Mammary epithelial cell (primary cell): ENCODE measurements at regions of chr1 and their contacts with region 1.

Region 1: GRCh38 chr1:89632657-89633247 is at the start of gene LRRC8C:
- DNase-seq: peak; percentile 65
- H3K4me3 ChIP-seq: peak within 1 kb of the TSS; percentile 80 to 96 (median 92)
- H3K27ac ChIP-seq: peak within 1 kb of the TSS; percentile 60
- H3K4me1 ChIP-seq: peaks cover 28% of the 10 kb centered on the region
- H3K27me3 ChIP-seq: no peaks in the 10 kb centered on the region
- CTCF ChIP-seq: peak in 1 of 2 donors; percentile 37
- total RNA-seq, gene LRRC8C: 6.5 to 17.2 TPM

Region 2: DNA sequence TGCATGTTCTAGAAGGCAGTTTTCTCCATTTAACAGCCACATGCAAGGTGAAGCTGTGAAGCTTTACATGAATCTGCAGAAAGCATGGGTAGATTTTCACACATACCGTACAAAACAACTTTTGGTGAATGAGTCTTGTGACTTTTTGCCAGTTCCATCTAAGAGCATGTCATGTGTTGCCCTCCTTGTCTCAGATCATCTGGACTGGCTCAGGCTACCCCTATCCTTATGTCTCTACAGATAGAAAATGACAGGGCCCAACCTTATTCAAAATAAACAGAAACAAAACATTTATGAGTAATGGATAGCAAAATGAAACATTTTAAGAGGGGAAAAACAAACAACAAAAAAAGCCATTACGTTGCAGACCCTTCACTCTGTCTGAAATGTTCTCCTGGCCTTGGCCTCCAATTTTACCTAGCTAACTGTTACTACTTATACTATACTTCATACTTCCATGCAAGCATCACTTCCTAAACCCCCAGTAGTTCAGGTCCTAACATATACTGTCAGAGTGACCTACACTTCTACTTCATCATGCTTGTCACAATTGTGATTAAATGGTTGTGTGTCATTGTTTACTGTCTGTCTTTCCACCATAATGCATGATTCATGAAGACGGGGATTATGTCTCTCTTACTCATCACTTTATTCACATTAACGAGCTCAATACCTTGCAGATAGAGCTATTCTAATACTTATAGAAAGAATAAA is 39.2 kb after region 1 on chr1:
- CTCF ChIA-PET with region 1: no interaction called
- dilution Hi-C with region 1: no loop called
- in situ Hi-C with region 1: no loop called
- intact Hi-C with region 1: loop called (anchors 2 kb)
- DNase-seq: peak; percentile 86
- H3K4me3 ChIP-seq: no peak overlapping the region
- H3K27ac ChIP-seq: no peak overlapping the region
- H3K4me1 ChIP-seq: peaks cover 22% of the 10 kb centered on the region
- H3K27me3 ChIP-seq: no peaks in the 10 kb centered on the region
- CTCF ChIP-seq: no peak

Region 3: DNA sequence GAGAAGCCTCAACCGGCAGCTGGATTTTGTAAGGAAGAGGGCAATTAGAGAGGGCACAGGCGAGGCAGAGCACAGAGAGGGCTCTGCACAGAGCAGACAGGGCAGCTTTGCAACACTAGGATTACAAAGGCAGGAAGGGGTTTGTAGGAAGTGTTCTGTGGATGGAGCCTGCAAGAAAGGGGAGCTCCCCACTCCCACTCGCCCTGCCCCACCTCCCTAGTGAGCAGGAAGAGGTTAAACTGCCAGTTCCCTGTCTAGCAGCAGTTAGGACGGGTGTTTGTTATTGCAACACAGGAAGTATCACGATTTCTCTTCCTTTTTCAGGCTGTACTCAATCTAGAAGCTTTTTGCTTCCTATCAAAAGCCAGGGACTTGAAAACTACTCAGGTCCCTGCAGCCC is 124.8 kb after region 1 on chr1:
- CTCF ChIA-PET with region 1: no interaction called
- dilution Hi-C with region 1: no loop called
- in situ Hi-C with region 1: loop called (anchors 5 to 10 kb)
- intact Hi-C with region 1: no loop called
- DNase-seq: no peak
- H3K4me3 ChIP-seq: no peak overlapping the region
- H3K27ac ChIP-seq: no peak overlapping the region
- H3K4me1 ChIP-seq: peaks cover 2% of the 10 kb centered on the region
- H3K27me3 ChIP-seq: no peaks in the 10 kb centered on the region
- CTCF ChIP-seq: no peak

Region 4: DNA sequence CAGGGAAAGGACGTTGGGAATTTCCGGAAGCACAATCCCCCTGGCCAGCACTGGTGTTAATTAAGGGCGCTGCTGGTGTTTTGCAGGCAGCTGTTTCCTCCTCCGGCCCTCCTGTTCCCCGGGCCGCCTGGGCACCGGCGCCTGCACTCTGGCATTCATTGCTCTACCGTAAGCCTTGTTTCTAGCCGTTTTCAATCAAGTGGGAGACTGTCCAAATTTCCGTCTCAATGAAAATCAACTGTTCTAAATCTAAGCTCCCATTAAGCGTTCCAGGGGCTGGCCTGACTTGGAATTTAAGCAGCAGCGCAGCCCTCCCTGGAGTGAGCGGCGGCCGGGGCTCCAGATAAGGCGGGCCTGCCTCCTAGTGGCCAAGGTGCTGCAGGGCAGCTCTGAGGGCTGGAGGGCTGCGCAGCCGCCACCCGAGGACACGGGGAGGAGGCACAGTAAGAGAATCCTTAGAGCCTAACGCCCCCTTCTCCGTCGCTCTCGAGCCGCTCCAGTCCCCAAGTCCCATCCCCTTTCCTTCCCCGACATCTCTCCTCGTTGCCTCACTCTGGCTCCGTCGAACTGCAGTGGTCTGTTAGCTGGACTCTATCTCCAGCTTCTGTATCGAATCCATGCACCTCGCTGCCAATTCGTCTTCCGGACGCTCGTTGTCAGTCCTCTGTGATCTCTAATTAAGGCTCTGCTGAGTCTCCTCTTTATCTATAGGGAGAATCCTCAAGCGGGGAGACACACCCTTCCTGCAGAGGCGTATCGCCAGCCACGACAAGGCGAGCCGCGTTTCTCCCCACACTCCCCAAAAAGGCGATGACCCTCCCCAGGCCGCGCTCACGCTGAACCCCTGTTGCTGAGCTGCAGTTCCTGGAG is 130.3 kb after region 1 on chr1:
- CTCF ChIA-PET with region 1: no interaction called
- dilution Hi-C with region 1: no loop called
- in situ Hi-C with region 1: loop called (anchors 5 to 10 kb)
- intact Hi-C with region 1: loop called (anchors 1 kb)
- DNase-seq: peak; percentile 68
- H3K4me3 ChIP-seq: peak overlapping the region; percentile 41 to 53 (median 52)
- H3K27ac ChIP-seq: no peak overlapping the region
- H3K4me1 ChIP-seq: peaks cover 22% of the 10 kb centered on the region
- H3K27me3 ChIP-seq: no peaks in the 10 kb centered on the region
- CTCF ChIP-seq: peak; percentile 85 to 99

Region 5: GRCh38 chr1:89820422-89821321 is 187.9 kb after region 1 on chr1 and contains the start of gene LRRC8D:
- CTCF ChIA-PET with region 1: no interaction called
- dilution Hi-C with region 1: no loop called
- in situ Hi-C with region 1: no loop called
- intact Hi-C with region 1: loop called (anchors 5 kb)
- DNase-seq: peak; percentile 74
- H3K4me3 ChIP-seq: peak within 1 kb of the TSS; percentile 56 to 73 (median 65)
- H3K27ac ChIP-seq: no peak within 1 kb of the TSS
- H3K4me1 ChIP-seq: peaks cover 15% of the 10 kb centered on the region
- H3K27me3 ChIP-seq: no peaks in the 10 kb centered on the region
- CTCF ChIP-seq: no peak
- total RNA-seq, gene LRRC8D: 39.5 to 47.7 TPM

Region 6: DNA sequence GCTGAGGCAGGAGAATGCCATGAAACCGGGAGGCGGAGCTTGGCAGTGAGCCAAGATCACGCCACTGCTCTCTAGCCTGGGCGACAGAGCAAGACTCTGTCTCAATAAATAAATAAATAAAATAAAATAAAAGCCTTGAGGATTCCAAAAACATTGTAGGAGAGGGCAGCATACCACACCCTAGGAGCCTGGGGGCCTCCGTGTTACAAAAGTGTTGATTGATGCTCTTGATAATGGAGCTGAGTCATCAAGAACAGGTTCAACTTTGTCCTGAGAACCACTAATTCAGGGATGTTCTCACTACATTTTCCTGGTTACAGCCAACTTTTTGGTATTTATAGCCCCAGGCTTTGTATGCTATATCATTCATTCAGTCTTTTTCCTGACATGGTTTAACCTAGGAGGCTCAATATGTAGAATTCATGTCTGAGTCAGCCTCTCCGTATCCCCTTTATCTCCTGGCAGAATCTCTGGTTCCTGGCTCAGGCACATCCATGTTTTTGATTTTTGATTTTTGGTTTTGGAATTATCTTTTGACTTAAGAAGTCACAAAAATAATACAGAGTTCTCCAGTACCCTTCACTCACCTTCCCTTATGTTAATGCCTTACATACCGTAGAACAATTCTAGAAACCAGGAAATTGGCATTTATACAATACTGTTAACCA is 257.5 kb after region 1 on chr1:
- CTCF ChIA-PET with region 1: no interaction called
- dilution Hi-C with region 1: no loop called
- in situ Hi-C with region 1: loop called in 1 of 2 experiments (anchors 25 kb)
- intact Hi-C with region 1: no loop called
- DNase-seq: peak; percentile 97
- H3K4me3 ChIP-seq: peak overlapping the region in 1 of 3 experiments; percentile 30
- H3K27ac ChIP-seq: peak overlapping the region; percentile 93
- H3K4me1 ChIP-seq: peaks cover 45% of the 10 kb centered on the region
- H3K27me3 ChIP-seq: no peaks in the 10 kb centered on the region
- CTCF ChIP-seq: no peak

Region 7: DNA sequence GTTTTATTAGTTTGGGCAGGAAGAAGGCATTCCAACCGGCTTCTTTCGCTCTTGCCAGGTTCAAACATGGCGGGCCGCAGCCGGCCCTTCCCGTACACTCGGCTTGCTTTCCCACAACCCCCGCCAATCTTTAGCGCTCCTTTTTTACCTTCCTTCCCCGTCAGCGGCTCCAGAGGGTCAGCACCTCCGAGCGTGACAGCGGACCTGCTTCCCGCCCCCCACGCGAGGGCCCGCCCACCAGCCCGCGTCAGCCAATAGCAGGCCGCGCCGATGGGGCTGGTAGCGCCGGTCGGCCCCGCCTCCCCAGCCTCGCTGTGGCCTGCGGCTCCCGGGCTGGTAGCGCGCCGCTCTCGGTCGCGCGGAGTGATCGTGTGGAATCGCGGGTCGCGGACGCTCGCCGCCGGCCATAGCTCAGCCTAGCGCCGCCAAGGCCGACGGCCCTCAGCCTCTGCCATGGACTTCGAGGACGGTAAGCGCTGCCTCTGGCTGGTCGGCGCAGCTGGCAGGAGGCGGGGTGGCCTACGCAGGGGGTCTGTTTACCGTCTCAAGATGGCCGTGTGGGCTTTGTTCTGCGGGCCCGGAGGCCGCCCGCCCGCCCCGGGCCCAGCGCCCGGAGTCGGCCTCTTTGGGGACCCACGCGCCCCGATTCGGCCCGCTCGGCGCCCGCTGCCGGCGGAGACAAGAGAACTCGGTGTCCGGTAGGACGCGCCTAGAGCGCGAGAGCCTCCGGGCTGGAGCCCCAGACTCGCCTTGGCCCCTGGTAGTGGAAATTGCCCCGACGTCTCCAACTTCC is 362.2 kb after region 1 on chr1 and contains the start of gene ZNF326:
- CTCF ChIA-PET with region 1: no interaction called
- dilution Hi-C with region 1: no loop called
- in situ Hi-C with region 1: loop called (anchors 25 kb)
- intact Hi-C with region 1: loop called (anchors 2 kb)
- DNase-seq: peak; percentile 98
- H3K4me3 ChIP-seq: peak within 1 kb of the TSS; percentile 73 to 97 (median 84)
- H3K27ac ChIP-seq: peak within 1 kb of the TSS; percentile 89
- H3K4me1 ChIP-seq: peaks cover 27% of the 10 kb centered on the region
- H3K27me3 ChIP-seq: no peaks in the 10 kb centered on the region
- CTCF ChIP-seq: no peak
- total RNA-seq, gene ZNF326: 12.7 to 26.8 TPM